Activated CD4-positive, alpha-beta T cell treated with anti-CD3 and anti-CD28 coated beads, Interleukin-2, amount 10 ng/mL, durations not matched to agents 24 days and 14 days (primary cell): ENCODE measurements at regions of chr6 and their contacts with region 1.

Region 1: GRCh38 chr6:46221222-46221793 is 50.5 kb upstream of the ENPP5 start:
- DNase-seq: peak; percentile 66
- H3K4me3 Mint-ChIP-seq: no peak overlapping the region
- H3K27ac Mint-ChIP-seq: no peak overlapping the region
- H3K4me1 Mint-ChIP-seq: no peaks in the 10 kb centered on the region
- H3K27me3 Mint-ChIP-seq: peaks cover 4% of the 10 kb centered on the region

Region 2: GRCh38 chr6:46175446-46175845 is 45.9 kb before region 1 on chr6:
- intact Hi-C with region 1: loop called (anchors 5 kb)
- DNase-seq: peak; percentile 76
- H3K4me3 Mint-ChIP-seq: no peak overlapping the region
- H3K27ac Mint-ChIP-seq: no peak overlapping the region
- H3K4me1 Mint-ChIP-seq: peaks cover 18% of the 10 kb centered on the region
- H3K27me3 Mint-ChIP-seq: peaks cover 67% of the 10 kb centered on the region

Region 3: GRCh38 chr6:46626228-46626909 is 405.1 kb after region 1 on chr6:
- intact Hi-C with region 1: loop called (anchors 1 kb)
- DNase-seq: no peak
- H3K4me3 Mint-ChIP-seq: no peak overlapping the region
- H3K27ac Mint-ChIP-seq: no peak overlapping the region
- H3K4me1 Mint-ChIP-seq: peaks cover 3% of the 10 kb centered on the region
- H3K27me3 Mint-ChIP-seq: peaks cover 29% of the 10 kb centered on the region